ENCODE measurements at regions of chr12 and their contacts with region 1.

Region 1: DNA sequence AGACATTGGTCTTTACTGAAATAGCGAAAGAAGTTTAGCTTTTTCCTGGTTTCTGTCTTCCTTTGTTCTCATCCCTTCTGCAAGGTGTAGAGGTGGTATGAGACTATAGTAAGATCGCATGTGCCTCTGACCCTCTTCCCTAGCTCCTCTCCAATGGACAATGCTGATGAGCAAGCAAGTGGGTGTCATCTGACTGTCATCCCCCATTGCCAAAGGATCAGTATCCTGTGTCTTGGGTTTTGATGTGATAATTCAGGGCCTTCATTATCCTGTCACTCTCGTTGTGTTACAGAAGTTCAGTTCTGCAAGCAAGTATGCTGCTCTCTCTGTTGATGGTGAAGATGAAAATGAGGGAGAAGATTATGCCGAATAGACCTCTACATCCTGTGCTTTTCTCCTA is 10.0 kb upstream of the TNS2 start:
- DNase-seq: no peak
- H3K4me3 ChIP-seq: no peak overlapping the region
- CTCF ChIP-seq: no peak

Region 2: DNA sequence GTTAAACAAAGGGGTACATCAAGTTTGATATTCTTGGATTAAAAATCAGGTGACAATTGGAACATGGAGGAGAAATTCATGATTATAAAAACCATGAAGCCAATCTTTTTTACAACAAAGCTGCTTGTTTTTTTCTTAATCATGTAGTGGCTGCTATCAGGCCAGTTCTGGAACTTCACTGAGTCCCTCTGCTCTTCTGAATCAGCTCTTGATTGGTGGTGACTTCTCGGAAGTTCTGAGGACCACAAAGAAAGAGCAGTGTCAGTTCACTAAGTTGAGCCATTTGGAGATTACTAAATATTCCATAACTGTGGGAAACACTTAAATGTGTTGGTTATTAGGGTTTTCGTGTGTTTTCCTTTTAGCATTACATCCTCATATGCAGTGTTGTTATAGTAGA is 25.1 kb before region 1 on chr12:
- CTCF ChIA-PET with region 1: interaction called, 19 read pairs
- POLR2A ChIA-PET with region 1: no interaction called
- DNase-seq: no peak
- H3K4me3 ChIP-seq: no peak overlapping the region
- CTCF ChIP-seq: no peak

Region 3: DNA sequence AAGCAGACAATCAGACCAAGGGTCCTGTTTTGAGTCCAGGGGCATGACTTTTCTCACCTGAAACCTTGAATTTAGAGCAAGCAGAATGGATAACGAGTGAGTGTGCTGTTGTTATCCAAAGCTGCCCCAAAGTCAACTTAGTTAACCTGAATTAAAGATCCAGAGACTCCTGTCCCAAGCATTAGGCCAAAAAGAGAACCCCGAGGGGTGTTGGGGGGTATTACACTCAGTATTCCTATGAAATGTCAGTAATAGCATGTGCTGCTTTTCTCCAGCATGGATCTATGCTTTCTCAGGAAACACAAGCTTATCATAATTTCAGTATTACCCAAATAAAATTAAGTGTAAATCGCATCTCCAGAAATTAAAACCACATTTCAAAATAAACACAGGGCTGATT is 14.6 kb before region 1 on chr12:
- CTCF ChIA-PET with region 1: interaction called, 71 read pairs
- POLR2A ChIA-PET with region 1: no interaction called
- DNase-seq: no peak
- H3K4me3 ChIP-seq: no peak overlapping the region
- CTCF ChIP-seq: no peak

Region 4: GRCh38 chr12:53054112-53054833 is 14.4 kb after region 1 on chr12:
- CTCF ChIA-PET with region 1: interaction called, 40 read pairs
- POLR2A ChIA-PET with region 1: no interaction called
- DNase-seq: no peak
- H3K4me3 ChIP-seq: peak overlapping the region; percentile 49
- CTCF ChIP-seq: no peak

Measured in AG04449 (cell line).